Activated CD4-positive, alpha-beta memory T cell treated with anti-CD3 and anti-CD28 coated beads for 36 hours (primary cell): ENCODE measurements at regions of chr12 and their contacts with region 1.

Region 1: GRCh38 chr12:51083126-51083833 is at the start of gene CSRNP2:
- DNase-seq: peak; percentile 97
- H3K4me3 Mint-ChIP-seq: peak within 1 kb of the TSS; percentile 91
- H3K27ac Mint-ChIP-seq: peak within 1 kb of the TSS; percentile 83
- H3K4me1 Mint-ChIP-seq: peaks cover 46% of the 10 kb centered on the region
- H3K27me3 Mint-ChIP-seq: no peaks in the 10 kb centered on the region
- total RNA-seq, gene CSRNP2: 19.2 to 20.2 TPM

Region 2: GRCh38 chr12:50924439-50925341 is 158.6 kb before region 1 on chr12:
- CTCF ChIA-PET with region 1: no interaction called
- POLR2A ChIA-PET with region 1: no interaction called
- intact Hi-C with region 1: no loop called
- DNase-seq: peak; percentile 13
- H3K4me3 Mint-ChIP-seq: no peak overlapping the region
- H3K27ac Mint-ChIP-seq: no peak overlapping the region
- H3K4me1 Mint-ChIP-seq: peaks cover 6% of the 10 kb centered on the region
- H3K27me3 Mint-ChIP-seq: peaks cover 1% of the 10 kb centered on the region

Region 3: GRCh38 chr12:51047655-51048540 is 35.4 kb before region 1 on chr12 and contains the start of gene LETMD1:
- CTCF ChIA-PET with region 1: no interaction called
- POLR2A ChIA-PET with region 1: interaction called, 13 read pairs
- intact Hi-C with region 1: loop called (anchors 1 kb)
- DNase-seq: peak; percentile 95
- H3K4me3 Mint-ChIP-seq: peak within 1 kb of the TSS; percentile 97
- H3K27ac Mint-ChIP-seq: peak within 1 kb of the TSS; percentile 96
- H3K4me1 Mint-ChIP-seq: peaks cover 31% of the 10 kb centered on the region
- H3K27me3 Mint-ChIP-seq: no peaks in the 10 kb centered on the region
- total RNA-seq, gene LETMD1: 79.8 to 84.0 TPM

Region 4: DNA sequence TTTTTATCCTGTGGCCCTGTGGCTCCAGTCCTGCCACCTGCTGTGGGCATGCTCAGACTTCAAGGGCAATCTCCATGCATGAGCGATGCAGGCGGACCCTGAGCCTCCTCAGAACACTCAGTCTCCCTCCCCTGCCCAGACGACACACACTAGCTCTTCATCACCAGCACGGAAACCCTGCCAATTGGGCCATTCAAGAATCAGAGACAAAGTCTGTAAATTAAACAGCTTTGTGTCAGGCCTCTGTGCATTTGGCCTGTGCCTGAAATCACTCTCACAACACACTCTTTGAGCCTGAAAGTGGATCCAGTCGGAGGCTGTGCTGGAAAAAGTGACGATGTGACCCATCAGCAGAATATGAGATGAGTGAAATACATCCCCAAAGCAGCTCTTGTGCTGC is 122.1 kb after region 1 on chr12:
- CTCF ChIA-PET with region 1: no interaction called
- POLR2A ChIA-PET with region 1: no interaction called
- intact Hi-C with region 1: loop called (anchors 1 kb)
- DNase-seq: no peak
- H3K4me3 Mint-ChIP-seq: no peak overlapping the region
- H3K27ac Mint-ChIP-seq: no peak overlapping the region
- H3K4me1 Mint-ChIP-seq: peaks cover 22% of the 10 kb centered on the region
- H3K27me3 Mint-ChIP-seq: no peaks in the 10 kb centered on the region

Region 5: DNA sequence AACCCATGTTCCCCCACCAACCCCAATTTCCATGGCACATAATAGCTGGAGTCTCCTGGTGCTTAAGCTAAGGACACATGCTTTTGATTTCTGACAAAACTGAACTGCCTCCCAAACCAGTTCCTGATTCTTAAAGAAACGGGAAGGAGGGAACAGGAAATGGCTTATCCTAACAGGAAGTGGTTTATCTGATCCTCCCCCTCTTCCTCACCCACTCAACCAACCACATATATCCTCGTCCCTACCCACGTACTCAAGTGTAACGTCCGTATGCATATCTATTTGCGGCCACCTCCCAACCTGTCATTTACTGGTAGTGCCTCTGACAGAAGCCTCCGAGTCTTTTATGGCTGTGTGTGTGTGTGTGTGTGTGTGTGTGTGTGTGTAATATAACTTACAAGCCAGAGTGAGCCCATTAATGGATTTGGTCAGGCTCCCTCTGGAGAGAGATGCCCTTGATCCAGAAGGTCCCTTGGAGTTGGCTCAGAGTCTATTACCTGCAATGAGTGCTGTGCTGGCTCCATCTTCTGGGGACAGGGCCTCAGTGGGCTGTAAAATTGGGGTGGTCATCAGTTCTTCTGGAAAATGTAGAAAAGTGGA is 163.1 kb after region 1 on chr12:
- CTCF ChIA-PET with region 1: no interaction called
- POLR2A ChIA-PET with region 1: no interaction called
- intact Hi-C with region 1: loop called (anchors 2 kb)
- DNase-seq: peak; percentile 61
- H3K4me3 Mint-ChIP-seq: peak overlapping the region; percentile 15
- H3K27ac Mint-ChIP-seq: peak overlapping the region; percentile 85
- H3K4me1 Mint-ChIP-seq: peaks cover 46% of the 10 kb centered on the region
- H3K27me3 Mint-ChIP-seq: no peaks in the 10 kb centered on the region

Region 6: GRCh38 chr12:51368640-51369517 is 285.6 kb after region 1 on chr12:
- CTCF ChIA-PET with region 1: no interaction called
- POLR2A ChIA-PET with region 1: no interaction called
- intact Hi-C with region 1: loop called (anchors 1 kb)
- DNase-seq: peak; percentile 95
- H3K4me3 Mint-ChIP-seq: peak overlapping the region; percentile 61
- H3K27ac Mint-ChIP-seq: peak overlapping the region; percentile 86
- H3K4me1 Mint-ChIP-seq: peaks cover 51% of the 10 kb centered on the region
- H3K27me3 Mint-ChIP-seq: no peaks in the 10 kb centered on the region